HEK293T (cell line): ENCODE measurements at regions of chr13 and their contacts with region 1.

Region 1: GRCh38 chr13:41299316-41300094 is 11.6 kb upstream of the NAA16 start:
- DNase-seq: no peak

Region 2: DNA sequence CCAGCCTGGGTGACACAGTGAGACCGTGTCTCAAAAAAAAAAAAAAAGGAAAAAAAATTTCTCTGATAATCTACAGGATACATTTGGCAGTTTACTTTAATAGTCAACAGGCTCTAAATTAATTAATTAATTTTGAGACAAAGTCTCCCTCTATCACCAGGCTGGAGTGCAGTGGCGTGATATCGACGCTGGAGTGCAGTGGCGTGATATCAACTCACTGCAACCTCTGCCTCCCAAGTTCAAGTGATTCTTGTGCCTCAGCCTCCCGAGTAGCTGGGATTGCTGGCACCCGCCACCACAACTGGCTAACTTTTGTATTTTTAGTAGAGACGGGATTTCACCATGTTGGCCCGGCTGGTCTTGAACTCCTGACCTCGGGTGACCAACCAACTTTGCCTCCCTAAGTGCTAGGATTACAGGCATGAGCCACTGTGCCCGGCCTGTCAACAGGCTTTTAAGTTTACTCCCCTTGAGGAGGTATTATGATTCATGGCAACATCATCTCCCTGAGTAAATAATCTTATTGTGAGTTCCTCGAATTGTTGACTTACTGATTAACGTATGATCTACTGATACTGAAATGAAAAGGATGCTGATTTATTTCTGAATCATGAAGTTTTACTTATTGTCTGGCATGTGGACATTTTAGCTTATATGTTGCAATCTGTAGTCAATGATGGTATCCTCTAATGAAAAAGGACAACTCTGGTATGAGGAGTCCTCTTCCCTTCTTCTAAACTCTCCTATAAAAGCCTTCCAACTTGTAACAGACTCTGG is 14.8 kb before region 1 on chr13:
- CTCF ChIA-PET with region 1: interaction called, 10 read pairs
- POLR2A ChIA-PET with region 1: no interaction called
- DNase-seq: no peak

Region 3: DNA sequence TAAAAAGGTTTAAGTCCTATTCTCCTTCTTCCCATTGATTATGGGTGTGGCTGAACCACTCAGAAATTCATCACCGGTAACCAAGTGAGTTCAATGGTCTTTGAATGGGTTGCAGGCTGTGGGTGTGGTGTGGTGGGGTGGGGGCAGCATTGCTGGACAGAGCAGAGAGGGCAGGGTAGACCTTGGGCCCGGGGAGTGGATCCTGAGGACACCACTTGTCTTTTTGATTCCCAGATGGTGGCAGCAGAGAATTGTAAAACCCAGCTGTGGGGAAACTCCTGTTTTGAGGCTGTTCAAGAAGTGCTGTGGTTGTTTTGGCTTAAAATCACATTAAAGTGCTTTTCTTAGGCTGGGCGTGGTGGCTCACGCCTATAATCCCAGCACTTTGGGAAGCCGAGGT is 112.0 kb after region 1 on chr13:
- CTCF ChIA-PET with region 1: no interaction called
- POLR2A ChIA-PET with region 1: no interaction called
- DNase-seq: peak; percentile 17